CD8-positive, alpha-beta T cell (primary cell): ENCODE measurements at regions of chr12 and their contacts with region 1.

Region 1: GRCh38 chr12:125183187-125184067 is 118.2 kb downstream of the AACS start:
- DNase-seq: peak; percentile 61 to 86 (median 79)
- ATAC-seq: peak; percentile 84
- H3K4me3 ChIP-seq: no peak overlapping the region
- H3K4me3 Mint-ChIP-seq: no peak overlapping the region
- H3K27ac ChIP-seq: no peak overlapping the region
- H3K27ac Mint-ChIP-seq: no peak overlapping the region
- H3K4me1 ChIP-seq: peaks cover 7% of the 10 kb centered on the region
- H3K4me1 Mint-ChIP-seq: peaks cover 10% of the 10 kb centered on the region
- H3K27me3 ChIP-seq: peaks cover 0 to 18% of the 10 kb centered on the region in 2 experiments
- H3K27me3 Mint-ChIP-seq: peaks cover 50% of the 10 kb centered on the region
- CTCF ChIP-seq: peak; percentile 99

Region 2: DNA sequence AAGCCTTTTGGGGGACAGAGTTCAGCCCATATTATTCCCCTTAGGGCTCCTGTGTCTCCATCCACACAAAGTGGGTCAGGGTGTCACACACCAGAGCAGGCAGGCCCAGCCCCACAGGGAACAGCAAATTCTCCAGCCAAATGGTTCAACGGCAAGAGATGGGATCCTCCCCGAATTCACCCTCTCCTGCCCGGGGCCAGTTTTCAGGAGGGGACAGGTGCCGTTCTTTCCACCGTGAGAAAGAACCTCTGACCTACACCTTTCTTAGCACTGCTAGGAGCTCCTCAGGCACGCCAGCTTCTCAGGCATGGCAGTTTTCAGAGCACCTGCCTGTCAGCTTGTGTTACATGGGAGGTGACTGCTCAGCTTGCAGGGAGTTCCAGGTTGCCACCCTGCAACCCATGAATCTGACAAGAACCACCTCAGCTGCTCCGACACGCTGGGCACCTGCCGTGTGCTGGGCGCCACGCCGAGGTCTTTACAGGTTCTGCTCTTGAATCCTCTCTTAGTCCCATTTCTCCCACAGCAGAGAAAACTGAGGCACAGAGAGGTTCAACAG is 177.1 kb before region 1 on chr12:
- CTCF ChIA-PET with region 1: no interaction called
- POLR2A ChIA-PET with region 1: no interaction called
- intact Hi-C with region 1: no loop called
- DNase-seq: no peak
- ATAC-seq: no peak
- H3K4me3 ChIP-seq: no peak overlapping the region
- H3K4me3 Mint-ChIP-seq: no peak overlapping the region
- H3K27ac ChIP-seq: no peak overlapping the region
- H3K27ac Mint-ChIP-seq: no peak overlapping the region
- H3K4me1 ChIP-seq: no peaks in the 10 kb centered on the region
- H3K4me1 Mint-ChIP-seq: no peaks in the 10 kb centered on the region
- H3K27me3 ChIP-seq: no peaks in the 10 kb centered on the region
- H3K27me3 Mint-ChIP-seq: no peaks in the 10 kb centered on the region
- CTCF ChIP-seq: no peak

Region 3: DNA sequence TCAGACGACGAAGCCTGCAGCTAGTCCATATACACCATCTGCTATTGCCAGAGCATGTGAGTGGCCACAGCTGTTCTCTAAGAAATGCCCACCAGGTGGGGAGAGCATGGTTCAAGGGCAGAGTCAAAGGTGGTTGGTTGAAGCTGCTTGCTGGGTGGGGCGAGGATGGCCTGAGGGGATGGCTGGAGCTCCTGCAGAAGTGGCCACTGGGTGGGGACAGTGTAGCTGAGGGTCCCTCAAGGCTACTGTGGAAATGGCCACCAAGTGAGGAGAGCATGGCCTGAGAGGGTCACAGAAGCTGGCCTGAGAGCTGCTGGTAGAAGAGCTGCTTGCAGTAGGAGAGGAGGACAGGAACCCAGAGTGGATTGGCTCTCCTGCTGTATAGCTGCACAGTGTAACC is 15.8 kb before region 1 on chr12:
- CTCF ChIA-PET with region 1: interaction called, 24 read pairs
- POLR2A ChIA-PET with region 1: no interaction called
- intact Hi-C with region 1: no loop called
- DNase-seq: no peak
- ATAC-seq: no peak
- H3K4me3 ChIP-seq: no peak overlapping the region
- H3K4me3 Mint-ChIP-seq: no peak overlapping the region
- H3K27ac ChIP-seq: no peak overlapping the region
- H3K27ac Mint-ChIP-seq: no peak overlapping the region
- H3K4me1 ChIP-seq: no peaks in the 10 kb centered on the region
- H3K4me1 Mint-ChIP-seq: no peaks in the 10 kb centered on the region
- H3K27me3 ChIP-seq: no peaks in the 10 kb centered on the region
- H3K27me3 Mint-ChIP-seq: peaks cover 14% of the 10 kb centered on the region
- CTCF ChIP-seq: no peak

Region 4: DNA sequence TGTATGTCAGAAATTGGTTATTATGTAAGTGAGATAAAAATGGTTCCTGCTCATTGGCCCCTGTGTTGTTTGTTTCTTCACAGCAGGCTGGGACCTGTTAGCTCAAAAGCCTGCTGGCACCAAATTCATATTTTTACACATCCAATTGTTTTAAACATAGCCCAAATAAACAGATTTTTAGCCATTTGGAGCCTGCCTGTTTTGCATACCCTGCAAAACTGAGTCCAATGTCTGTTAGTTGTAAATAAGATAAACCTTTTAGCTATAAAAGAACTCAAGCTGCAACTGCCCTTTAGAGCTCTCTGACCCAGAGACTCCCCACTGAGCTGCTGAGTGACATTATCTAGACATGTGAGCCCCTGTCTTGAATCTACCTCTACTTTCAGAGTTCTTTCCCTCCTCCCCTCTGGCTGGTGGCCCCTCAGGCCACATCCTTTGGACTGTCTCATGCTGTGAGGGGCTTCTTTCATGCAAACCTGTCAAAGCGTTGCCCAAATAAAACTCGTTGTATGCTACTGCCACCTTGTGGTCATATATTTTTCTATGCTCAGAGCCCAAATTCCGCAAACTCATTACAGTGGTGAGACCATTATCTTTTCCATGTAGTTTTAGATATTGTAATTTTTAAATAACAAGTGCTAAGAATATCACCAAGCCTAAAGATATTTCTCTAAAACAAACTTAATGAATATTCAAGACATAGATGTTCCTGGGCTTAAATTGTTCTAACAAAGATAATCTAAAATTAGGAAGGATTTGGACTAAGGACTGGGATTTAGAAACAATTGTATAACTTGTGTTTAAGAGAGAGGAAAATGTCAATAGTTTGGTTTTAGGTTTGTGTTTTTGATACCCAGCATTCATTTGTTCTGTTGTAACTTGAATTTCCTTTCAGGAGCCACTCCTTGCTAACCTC is 219.7 kb after region 1 on chr12:
- CTCF ChIA-PET with region 1: interaction called, 6 read pairs
- POLR2A ChIA-PET with region 1: no interaction called
- intact Hi-C with region 1: loop called in 1 of 2 experiments (anchors 1 kb)
- DNase-seq: peak in 1 of 9 experiments; percentile 18
- ATAC-seq: no peak
- H3K4me3 ChIP-seq: no peak overlapping the region
- H3K4me3 Mint-ChIP-seq: no peak overlapping the region
- H3K27ac ChIP-seq: no peak overlapping the region
- H3K27ac Mint-ChIP-seq: no peak overlapping the region
- H3K4me1 ChIP-seq: no peaks in the 10 kb centered on the region
- H3K4me1 Mint-ChIP-seq: no peaks in the 10 kb centered on the region
- H3K27me3 ChIP-seq: no peaks in the 10 kb centered on the region
- H3K27me3 Mint-ChIP-seq: peaks cover 24% of the 10 kb centered on the region
- CTCF ChIP-seq: peak; percentile 22

Region 5: GRCh38 chr12:125434936-125435443 is 251.6 kb after region 1 on chr12:
- CTCF ChIA-PET with region 1: no interaction called
- POLR2A ChIA-PET with region 1: no interaction called
- intact Hi-C with region 1: no loop called
- DNase-seq: no peak
- ATAC-seq: no peak
- H3K4me3 ChIP-seq: no peak overlapping the region
- H3K4me3 Mint-ChIP-seq: no peak overlapping the region
- H3K27ac ChIP-seq: no peak overlapping the region
- H3K27ac Mint-ChIP-seq: no peak overlapping the region
- H3K4me1 ChIP-seq: no peaks in the 10 kb centered on the region
- H3K4me1 Mint-ChIP-seq: no peaks in the 10 kb centered on the region
- H3K27me3 ChIP-seq: peaks cover 0 to 2% of the 10 kb centered on the region in 2 experiments
- H3K27me3 Mint-ChIP-seq: peaks cover 3% of the 10 kb centered on the region
- CTCF ChIP-seq: no peak

Region 6: DNA sequence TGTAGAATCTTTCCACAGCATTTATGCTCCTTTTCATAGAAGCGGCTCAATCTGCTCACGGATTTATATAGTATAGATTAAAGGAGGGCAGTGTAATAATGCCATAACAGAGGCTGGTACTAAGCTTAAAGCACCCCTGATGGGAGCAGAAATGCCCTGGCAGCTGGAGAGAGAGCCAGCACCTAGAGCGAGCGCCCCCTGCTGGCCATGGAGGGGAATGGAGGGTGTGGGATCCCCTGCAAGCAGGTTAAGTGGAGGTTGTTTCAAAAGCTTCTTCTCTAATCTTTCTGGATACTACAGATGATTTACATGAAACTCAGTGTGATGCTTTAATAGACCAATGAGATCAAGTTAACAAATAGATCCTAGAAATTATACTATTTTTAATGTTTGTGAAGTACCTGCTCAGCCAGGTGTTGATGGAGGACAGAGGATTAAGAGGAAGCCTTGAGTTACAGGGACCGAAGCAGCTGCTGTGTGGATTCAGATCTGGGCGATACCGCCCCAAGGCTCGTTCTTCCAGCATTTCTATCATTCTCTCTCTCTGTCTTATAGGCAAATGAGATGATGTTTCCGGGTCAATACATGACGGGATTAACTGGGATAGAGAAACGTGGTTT is 1564.2 kb after region 1 on chr12:
- CTCF ChIA-PET with region 1: interaction called, 3 read pairs
- POLR2A ChIA-PET with region 1: no interaction called
- intact Hi-C with region 1: loop called (anchors 2 to 10 kb)
- DNase-seq: peak in 8 of 9 experiments; percentile 8 to 63 (median 47)
- ATAC-seq: no peak
- H3K4me3 ChIP-seq: no peak overlapping the region
- H3K4me3 Mint-ChIP-seq: no peak overlapping the region
- H3K27ac ChIP-seq: no peak overlapping the region
- H3K27ac Mint-ChIP-seq: no peak overlapping the region
- H3K4me1 ChIP-seq: no peaks in the 10 kb centered on the region
- H3K4me1 Mint-ChIP-seq: no peaks in the 10 kb centered on the region
- H3K27me3 ChIP-seq: no peaks in the 10 kb centered on the region
- H3K27me3 Mint-ChIP-seq: no peaks in the 10 kb centered on the region
- CTCF ChIP-seq: peak; percentile 80

Region 7: DNA sequence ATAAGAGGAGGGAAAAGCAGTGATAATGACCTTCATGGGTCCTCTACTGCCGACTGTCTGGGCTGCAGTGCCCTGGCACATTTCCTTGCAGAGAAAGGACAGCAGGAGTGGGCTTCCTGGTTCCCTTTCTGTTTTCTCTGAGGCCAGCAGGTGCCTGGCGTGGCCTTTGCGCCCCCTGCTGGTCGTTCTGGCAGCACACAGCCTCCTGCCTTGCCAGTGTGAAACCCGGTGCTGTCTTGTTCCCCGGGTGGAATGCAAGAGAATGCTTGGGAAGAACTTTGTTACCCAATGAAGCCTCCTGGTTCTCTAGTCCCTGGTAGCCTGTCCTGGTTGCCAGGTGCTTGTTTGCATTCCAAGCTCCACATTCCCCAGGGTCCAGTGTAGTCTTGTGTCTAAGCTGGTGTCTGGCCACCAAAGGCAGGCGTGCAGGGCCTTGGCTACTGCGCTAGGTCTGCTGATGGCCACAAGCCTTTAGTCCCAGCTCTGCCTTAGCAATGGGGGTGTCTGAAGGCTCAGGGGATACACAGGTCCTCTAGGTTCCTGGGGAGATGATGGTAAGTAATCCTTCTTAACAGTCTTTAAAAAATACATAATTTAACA is 1691.1 kb after region 1 on chr12:
- CTCF ChIA-PET with region 1: interaction called, 5 read pairs
- POLR2A ChIA-PET with region 1: no interaction called
- intact Hi-C with region 1: loop called in 1 of 2 experiments (anchors 1 kb)
- DNase-seq: peak; percentile 8 to 72 (median 53)
- ATAC-seq: no peak
- H3K4me3 ChIP-seq: no peak overlapping the region
- H3K4me3 Mint-ChIP-seq: no peak overlapping the region
- H3K27ac ChIP-seq: no peak overlapping the region
- H3K27ac Mint-ChIP-seq: no peak overlapping the region
- H3K4me1 ChIP-seq: no peaks in the 10 kb centered on the region
- H3K4me1 Mint-ChIP-seq: no peaks in the 10 kb centered on the region
- H3K27me3 ChIP-seq: no peaks in the 10 kb centered on the region
- H3K27me3 Mint-ChIP-seq: peaks cover 2% of the 10 kb centered on the region
- CTCF ChIP-seq: peak; percentile 57